ENCODE measurements at regions of chr12 and their contacts with region 1.

Region 1: DNA sequence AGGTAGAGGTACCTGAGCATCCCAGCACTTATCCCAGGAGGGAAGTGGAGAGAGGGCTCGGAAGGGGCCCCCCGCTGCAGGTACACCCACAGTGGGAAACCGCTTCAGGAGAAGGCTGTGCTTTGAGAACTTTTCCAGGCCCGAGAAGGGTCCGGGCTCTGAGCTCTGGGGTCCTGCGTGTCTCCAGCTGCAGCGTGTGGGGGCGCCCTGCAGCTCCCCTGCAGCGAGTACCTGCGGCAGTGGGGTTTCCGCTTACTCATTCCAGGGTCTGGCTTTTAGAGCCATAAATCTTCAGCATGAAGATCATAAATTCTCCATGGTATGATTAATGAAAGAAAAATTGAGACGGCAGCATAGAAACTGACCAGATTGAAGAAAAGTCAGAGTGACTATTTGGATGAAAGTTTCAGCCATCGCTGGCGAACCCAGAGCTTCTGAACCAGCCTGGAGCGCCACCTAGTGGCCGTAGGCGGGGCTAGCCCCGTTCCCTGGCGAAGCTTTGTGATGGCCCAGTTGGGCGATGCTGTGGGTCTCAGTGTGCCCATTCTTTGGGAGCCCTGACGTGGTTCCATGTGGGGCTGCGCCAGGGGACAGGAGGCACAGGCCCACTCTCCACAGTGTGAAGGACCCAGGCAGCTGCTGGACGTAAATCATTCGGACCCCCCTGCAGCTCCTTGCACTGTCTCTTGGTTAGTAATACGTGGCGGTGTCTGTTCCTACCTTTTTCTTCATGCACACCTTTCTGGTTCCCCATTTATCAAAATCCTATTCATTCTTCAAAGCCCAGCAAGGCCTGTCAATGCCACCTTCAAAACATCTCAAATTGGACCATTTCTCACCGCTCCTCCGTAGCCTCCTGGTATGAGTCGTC is 198.2 kb downstream of the TSPAN9 start:
- DNase-seq: peak; percentile 88
- ATAC-seq: peak; percentile 79
- H3K4me3 Mint-ChIP-seq: peak overlapping the region; percentile 59
- H3K27ac Mint-ChIP-seq: no peak overlapping the region
- H3K4me1 Mint-ChIP-seq: peaks cover 20% of the 10 kb centered on the region
- H3K27me3 Mint-ChIP-seq: no peaks in the 10 kb centered on the region
- CTCF ChIP-seq: peak; percentile 97

Region 2: DNA sequence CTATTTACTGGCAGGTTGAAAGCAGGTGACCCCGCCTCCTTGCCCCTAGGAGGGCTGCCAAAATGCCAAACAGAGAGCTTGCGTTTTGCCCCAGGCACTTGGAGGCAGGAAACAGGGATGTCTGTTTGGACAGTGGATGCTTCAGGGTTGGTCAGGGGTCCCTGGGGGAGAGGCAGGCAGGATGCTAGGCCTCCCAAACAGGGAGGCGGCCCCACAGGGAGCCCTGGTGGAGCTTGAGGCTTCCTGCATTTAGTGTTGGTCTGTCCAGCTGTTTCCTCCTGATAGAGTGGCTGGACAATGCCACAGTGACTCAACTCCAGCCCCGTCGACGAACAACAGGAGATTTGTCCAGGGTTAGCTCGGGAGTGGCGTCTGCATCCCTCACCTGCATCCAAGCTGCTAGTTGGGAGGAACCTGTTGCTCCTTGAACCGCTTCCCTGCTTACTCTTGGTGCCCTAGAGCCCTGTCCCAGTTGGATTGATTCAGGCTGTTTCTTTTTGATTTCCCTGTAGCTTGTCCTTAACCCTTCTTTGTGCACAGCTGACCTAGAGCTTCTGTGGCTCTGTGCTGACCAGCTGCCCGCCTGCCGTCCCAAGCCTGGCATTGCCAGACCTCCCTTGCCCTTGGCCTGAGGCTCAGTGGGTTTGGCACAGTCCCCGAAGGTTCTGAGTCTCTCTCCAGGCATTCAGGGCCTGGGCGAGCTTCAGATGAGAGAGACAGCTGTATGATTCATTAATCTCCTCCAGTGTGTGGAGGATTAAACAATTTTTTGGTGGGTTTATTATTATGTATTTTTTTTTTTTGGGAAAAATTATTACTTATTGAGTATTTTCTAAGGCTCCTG is 152.3 kb before region 1 on chr12:
- CTCF ChIA-PET with region 1: interaction called, 16 read pairs
- POLR2A ChIA-PET with region 1: no interaction called
- DNase-seq: peak; percentile 13
- ATAC-seq: peak; percentile 56
- H3K4me3 Mint-ChIP-seq: no peak overlapping the region
- H3K27ac Mint-ChIP-seq: no peak overlapping the region; the same call in 1 of the 2 replicates
- H3K4me1 Mint-ChIP-seq: peaks cover 5% of the 10 kb centered on the region
- H3K27me3 Mint-ChIP-seq: no peaks in the 10 kb centered on the region; the same call in 1 of the 2 replicates
- CTCF ChIP-seq: no peak

Region 3: GRCh38 chr12:3150931-3151835 is 124.2 kb before region 1 on chr12:
- CTCF ChIA-PET with region 1: interaction called, 14 read pairs
- POLR2A ChIA-PET with region 1: no interaction called
- DNase-seq: peak; percentile 44
- ATAC-seq: peak; percentile 73
- H3K4me3 Mint-ChIP-seq: peak overlapping the region; percentile 15; the same call in 1 of the 2 replicates
- H3K27ac Mint-ChIP-seq: peak overlapping the region; percentile 88
- H3K4me1 Mint-ChIP-seq: peaks cover 67% of the 10 kb centered on the region
- H3K27me3 Mint-ChIP-seq: no peaks in the 10 kb centered on the region
- CTCF ChIP-seq: no peak

Region 4: DNA sequence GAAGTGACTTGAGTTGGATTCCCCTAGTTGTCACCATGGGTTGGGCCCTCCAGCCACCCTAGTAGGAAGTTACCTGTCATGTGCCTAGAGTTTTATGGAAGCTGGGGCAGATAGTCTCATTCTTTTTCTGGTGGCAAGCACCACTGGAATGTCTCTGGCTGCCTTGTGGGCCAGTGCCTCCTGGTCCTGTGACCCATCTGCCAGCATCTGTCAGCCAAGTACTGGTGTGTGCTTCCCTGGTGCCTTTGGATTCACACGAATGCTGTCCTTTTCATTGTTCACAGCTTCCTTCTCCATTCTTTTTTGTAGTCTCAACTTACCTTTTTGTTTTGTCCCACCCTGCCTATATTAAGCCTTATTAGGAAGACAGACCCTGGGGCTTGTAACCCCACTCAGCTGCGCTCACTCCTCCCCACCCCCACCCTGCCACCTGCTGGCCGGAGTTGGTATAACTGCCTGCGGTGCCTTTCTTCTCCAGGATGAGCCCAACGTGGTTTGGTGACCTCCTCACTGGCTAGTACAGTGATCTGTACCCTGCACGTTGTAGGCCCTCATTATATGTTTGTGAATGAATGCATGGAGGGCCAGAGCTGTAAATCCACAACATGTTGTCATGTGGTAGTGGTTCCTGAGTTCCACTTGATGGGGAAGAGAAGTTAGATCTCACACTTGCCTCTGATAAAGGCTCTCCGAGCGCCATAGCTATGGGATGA is 72.5 kb before region 1 on chr12:
- CTCF ChIA-PET with region 1: interaction called, 243 read pairs
- POLR2A ChIA-PET with region 1: interaction called, 3 read pairs
- DNase-seq: peak; percentile 83
- ATAC-seq: peak; percentile 6; the same call in 1 of the 2 replicates
- H3K4me3 Mint-ChIP-seq: no peak overlapping the region
- H3K27ac Mint-ChIP-seq: no peak overlapping the region
- H3K4me1 Mint-ChIP-seq: peaks cover 40% of the 10 kb centered on the region
- H3K27me3 Mint-ChIP-seq: peaks cover 36% of the 10 kb centered on the region
- CTCF ChIP-seq: peak; percentile 92

Region 5: DNA sequence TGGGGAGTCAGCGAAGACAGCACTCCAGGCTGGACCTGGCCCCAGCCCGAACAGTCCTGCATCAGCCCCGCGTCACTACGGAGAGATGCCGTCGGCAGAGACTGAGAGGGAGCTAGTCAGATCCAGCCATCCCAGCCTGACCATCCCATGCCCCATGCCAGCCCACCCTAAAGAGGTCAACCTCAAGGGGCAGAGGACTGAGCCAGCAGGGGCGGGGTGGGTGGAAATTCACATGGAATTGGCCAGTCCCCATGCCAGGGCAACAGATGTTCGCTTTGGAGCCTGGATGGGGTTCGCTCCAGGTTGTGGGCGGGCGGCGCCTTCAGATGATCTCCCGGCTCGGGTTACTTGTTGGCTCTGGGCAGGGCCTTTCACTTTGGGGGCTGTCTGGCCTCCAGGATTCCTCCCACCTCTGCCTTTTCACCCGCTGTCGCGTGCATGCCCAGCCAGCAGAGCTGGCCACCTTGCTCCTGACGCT is 44.0 kb before region 1 on chr12:
- CTCF ChIA-PET with region 1: interaction called, 20 read pairs
- POLR2A ChIA-PET with region 1: no interaction called
- DNase-seq: peak; percentile 67
- ATAC-seq: peak; percentile 76
- H3K4me3 Mint-ChIP-seq: peak overlapping the region; percentile 26
- H3K27ac Mint-ChIP-seq: peak overlapping the region; percentile 76; the same call in 1 of the 2 replicates
- H3K4me1 Mint-ChIP-seq: peaks cover 61% of the 10 kb centered on the region
- H3K27me3 Mint-ChIP-seq: no peaks in the 10 kb centered on the region
- CTCF ChIP-seq: no peak

Region 6: GRCh38 chr12:3261782-3262359 is 13.5 kb before region 1 on chr12:
- CTCF ChIA-PET with region 1: interaction called, 38 read pairs
- POLR2A ChIA-PET with region 1: no interaction called
- DNase-seq: no peak
- ATAC-seq: no peak
- H3K4me3 Mint-ChIP-seq: no peak overlapping the region
- H3K27ac Mint-ChIP-seq: peak overlapping the region; percentile 71; the same call in 1 of the 2 replicates
- H3K4me1 Mint-ChIP-seq: peaks cover 17% of the 10 kb centered on the region
- H3K27me3 Mint-ChIP-seq: no peaks in the 10 kb centered on the region
- CTCF ChIP-seq: no peak